Motor neuron (in vitro differentiated cells): ENCODE measurements at regions of chr3 and their contacts with region 1.

Region 1: DNA sequence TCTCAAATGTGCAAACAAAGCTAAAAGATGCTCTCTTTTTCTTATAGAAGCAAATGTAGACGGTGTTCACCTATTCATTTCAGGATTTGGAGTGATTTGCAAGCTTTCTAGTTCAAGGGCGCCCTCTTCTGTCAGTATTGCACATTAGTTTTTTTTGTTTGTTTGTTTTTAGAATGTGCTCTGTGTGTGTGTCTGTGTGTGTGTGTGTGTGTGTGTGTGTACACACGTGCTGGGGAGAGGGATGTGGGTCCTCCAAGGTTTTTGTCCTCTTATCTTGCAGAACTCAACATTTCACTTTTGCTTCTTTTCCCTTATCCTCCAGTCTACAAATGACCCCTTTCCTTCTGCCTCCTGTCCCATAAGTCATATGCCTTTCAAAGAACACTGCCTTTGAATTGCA is 23.5 kb downstream of the DNAH1 start:
- ATAC-seq: peak; percentile 47 to 82 (median 68)
- H3K4me3 ChIP-seq: no peak overlapping the region
- H3K27ac ChIP-seq: no peak overlapping the region
- H3K4me1 ChIP-seq: peaks cover 0 to 4% of the 10 kb centered on the region in 2 donors

Region 2: DNA sequence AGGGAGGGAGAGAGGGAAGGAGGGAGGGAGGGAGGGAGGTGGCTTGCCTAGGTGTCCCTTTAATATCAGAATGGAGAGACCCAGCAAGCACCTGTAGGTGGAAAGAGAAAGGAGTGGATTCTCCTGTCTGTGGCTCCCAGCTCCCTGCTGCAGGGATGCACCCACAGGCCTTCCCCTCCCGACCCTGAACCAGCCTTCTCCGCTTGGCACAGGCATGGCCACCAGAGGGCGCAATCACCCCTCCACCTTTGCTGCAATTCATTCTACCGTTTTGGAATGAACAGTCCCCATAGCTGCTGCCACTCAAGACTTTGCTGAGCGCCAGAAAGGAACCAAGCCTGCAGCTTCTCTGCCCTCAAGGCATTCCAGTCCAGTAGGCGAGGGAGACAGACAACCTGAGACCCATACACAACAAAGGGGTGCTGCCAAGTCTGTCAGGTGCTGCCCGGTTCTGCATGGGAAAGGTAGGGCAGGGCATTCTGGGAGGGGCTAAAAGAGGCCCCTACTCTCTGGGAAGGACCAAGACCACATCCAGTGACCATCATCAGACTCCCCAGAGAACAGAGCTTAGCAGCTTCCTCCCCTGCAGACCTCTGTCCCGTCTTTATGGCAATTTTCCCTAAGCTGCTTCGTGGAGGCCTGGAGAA is 119.1 kb before region 1 on chr3:
- in situ Hi-C with region 1: loop called in 3 of 9 experiments (anchors 10 to 25 kb)
- ATAC-seq: peak; percentile 74 to 97 (median 82)
- H3K4me3 ChIP-seq: no peak overlapping the region
- H3K27ac ChIP-seq: no peak overlapping the region
- H3K4me1 ChIP-seq: peaks cover 11 to 13% of the 10 kb centered on the region in 2 donors

Region 3: DNA sequence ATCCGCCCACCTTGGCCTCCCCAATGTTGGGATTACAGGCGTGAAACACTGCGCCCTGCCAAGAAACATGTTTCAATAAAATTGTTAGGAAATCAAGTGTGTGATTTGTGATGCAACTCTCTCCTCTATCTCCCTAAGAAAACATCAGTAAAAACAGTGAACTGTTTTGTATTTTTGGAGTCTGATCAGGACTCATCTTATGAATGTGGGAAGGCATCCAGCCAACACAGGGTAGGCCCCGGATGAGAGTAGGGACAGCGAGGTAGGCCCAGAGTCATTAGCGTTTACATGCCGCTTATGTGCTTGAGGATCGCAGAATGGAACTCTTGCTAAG is 52.9 kb before region 1 on chr3:
- in situ Hi-C with region 1: loop called in 1 of 9 experiments (anchors 5 kb)
- ATAC-seq: no peak
- H3K4me3 ChIP-seq: peak overlapping the region; percentile 42 to 83 (median 60)
- H3K27ac ChIP-seq: peak overlapping the region; percentile 100
- H3K4me1 ChIP-seq: peaks cover 10 to 44% of the 10 kb centered on the region in 2 donors